Naive thymus-derived CD4-positive, alpha-beta T cell (primary cell): ENCODE measurements at regions of chr9 and their contacts with region 1.

Region 1: DNA sequence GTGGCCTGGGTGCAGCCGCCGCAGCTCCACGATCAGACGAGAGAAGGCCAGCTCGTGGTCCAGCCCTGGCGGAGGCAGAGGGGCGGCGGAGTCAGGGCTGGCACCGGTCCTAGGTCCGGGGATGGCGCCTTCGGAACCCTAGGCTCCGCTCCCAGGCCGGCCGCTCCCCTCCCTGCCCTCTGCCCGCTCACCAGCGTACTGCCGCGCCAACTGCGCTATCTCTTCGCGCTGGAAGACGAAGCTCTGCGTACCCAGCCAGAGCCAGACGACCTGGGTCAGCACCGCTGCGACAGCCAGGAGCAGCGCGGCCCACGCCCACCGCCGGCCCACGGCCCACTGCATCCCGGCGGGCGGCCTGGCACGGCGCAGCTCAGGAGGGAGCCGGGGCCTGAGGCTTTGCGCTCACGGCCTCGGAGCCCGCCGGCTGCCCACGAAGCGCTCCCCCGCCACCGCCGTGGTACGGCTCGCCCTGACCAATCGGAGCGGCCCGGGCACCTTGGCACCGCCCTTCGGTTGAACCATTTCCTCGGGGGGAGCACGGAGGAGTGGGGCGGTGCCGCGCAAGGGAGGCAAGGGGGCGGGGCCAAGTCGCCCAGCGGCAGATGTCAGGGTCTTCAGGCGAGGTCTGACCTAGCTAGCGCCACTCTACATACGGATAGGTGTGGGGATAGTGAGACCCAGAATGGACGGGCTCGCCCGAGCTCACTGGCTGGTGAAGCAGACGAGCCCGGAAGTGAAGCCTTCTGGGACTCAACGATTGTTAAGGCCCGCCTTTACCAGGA is at the start of gene SIGMAR1:
- DNase-seq: peak; percentile 88 to 97 (median 95)
- ATAC-seq: peak; percentile 97
- H3K4me3 ChIP-seq: peak within 1 kb of the TSS; percentile 94
- H3K4me3 Mint-ChIP-seq: peak within 1 kb of the TSS; percentile 88 to 93 (median 90)
- H3K27ac ChIP-seq: peak within 1 kb of the TSS; percentile 70
- H3K27ac Mint-ChIP-seq: peak within 1 kb of the TSS; percentile 88 to 98 (median 95)
- H3K4me1 ChIP-seq: peaks cover 21 to 22% of the 10 kb centered on the region in 2 donors
- H3K4me1 Mint-ChIP-seq: peaks cover 26 to 45% (median 37%) of the 10 kb centered on the region in 7 donors
- H3K27me3 ChIP-seq: no peaks in the 10 kb centered on the region
- H3K27me3 Mint-ChIP-seq: no peaks in the 10 kb centered on the region
- total RNA-seq, gene SIGMAR1: 20.7 to 63.8 (median 46.0) TPM

Region 2: DNA sequence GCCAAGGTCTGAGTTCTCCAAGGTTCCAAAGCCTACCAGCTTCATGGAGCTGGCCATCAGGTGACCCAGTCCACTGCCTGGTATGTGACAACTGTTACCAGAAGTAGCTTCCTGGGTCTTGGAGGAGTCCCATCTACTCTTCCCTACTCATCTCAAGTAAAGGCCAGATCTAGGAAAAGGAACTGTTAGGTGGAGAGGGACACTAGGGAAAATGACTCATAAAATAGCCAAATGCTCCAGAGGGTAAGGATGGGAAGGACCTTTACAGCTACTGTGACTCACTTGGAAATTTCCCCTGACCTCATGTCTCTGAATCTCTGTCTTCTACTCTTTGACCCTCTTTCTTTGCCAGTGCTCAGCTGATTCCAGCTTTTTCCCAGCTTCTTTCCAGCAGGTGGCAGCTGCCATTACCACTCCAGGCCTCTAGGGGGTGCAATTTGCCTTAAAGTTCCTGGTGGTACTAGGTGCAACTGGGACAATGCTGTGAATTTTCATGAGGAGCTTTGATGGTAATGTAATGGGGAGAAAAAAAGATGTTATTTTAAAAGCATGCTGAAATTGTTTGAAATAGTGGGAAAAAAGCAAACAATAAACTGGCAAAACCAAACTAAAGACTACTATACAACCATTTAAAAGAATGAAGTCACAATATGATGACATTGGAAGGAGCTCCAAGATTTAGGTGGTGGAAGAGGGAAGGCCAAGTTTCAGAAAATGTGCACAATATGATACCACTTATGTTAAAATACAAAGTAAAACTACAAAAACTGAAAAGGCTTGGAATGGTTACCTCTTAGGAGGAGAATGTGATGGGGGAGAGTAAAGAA is 233.8 kb before region 1 on chr9:
- CTCF ChIA-PET with region 1: interaction called, 8 read pairs
- POLR2A ChIA-PET with region 1: interaction called, 3 read pairs
- intact Hi-C with region 1: loop called in 1 of 2 experiments (anchors 1 kb)
- DNase-seq: peak in 8 of 9 donors; percentile 22 to 56 (median 40)
- ATAC-seq: peak; percentile 82
- H3K4me3 ChIP-seq: no peak overlapping the region
- H3K4me3 Mint-ChIP-seq: no peak overlapping the region
- H3K27ac ChIP-seq: no peak overlapping the region
- H3K27ac Mint-ChIP-seq: no peak overlapping the region
- H3K4me1 ChIP-seq: no peaks in the 10 kb centered on the region
- H3K4me1 Mint-ChIP-seq: peaks cover 0 to 3% (median 0%) of the 10 kb centered on the region in 7 donors
- H3K27me3 ChIP-seq: no peaks in the 10 kb centered on the region
- H3K27me3 Mint-ChIP-seq: no peaks in the 10 kb centered on the region

Region 3: DNA sequence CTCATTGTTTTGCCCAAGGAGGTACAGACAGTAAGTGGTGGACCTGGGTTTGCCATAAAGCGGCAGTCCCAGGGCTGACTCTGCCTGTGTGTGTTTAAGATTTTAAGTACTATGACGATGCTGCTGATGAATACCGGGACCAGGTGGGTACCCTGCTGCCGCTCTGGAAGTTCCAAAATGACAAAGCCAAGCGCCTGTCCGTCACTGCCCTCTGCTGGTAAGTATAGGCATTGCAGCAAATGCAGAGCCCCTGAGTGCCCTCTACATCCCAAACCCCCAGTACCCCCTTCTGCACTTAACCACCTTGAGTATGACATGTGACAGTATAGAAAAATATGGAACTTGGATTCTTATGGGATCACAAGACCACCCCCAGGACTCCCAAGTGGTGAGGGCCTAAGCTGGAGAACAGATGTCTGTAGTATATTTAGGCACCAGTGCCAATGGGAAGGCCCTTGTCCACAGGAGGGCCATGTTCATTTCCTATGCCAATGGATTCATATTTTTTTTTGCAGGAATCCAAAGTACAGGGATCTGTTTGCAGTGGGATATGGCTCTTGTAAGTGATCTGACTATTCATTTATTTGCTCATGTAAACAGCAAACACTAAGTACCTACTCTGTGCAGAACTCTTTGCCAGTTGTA is 136.8 kb before region 1 on chr9:
- CTCF ChIA-PET with region 1: interaction called, 10 read pairs
- POLR2A ChIA-PET with region 1: no interaction called
- intact Hi-C with region 1: loop called in 1 of 2 experiments (anchors 1 kb)
- DNase-seq: peak; percentile 38 to 80 (median 61)
- ATAC-seq: peak; percentile 90
- H3K4me3 ChIP-seq: no peak overlapping the region
- H3K4me3 Mint-ChIP-seq: no peak overlapping the region
- H3K27ac ChIP-seq: no peak overlapping the region
- H3K27ac Mint-ChIP-seq: no peak overlapping the region
- H3K4me1 ChIP-seq: no peaks in the 10 kb centered on the region
- H3K4me1 Mint-ChIP-seq: peaks cover 0 to 2% (median 0%) of the 10 kb centered on the region in 7 donors
- H3K27me3 ChIP-seq: no peaks in the 10 kb centered on the region
- H3K27me3 Mint-ChIP-seq: peaks cover 0 to 19% (median 0%) of the 10 kb centered on the region in 5 donors

Region 4: GRCh38 chr9:34541540-34541939 is 96.0 kb before region 1 on chr9:
- CTCF ChIA-PET with region 1: no interaction called
- POLR2A ChIA-PET with region 1: no interaction called
- intact Hi-C with region 1: no loop called
- DNase-seq: no peak
- ATAC-seq: no peak
- H3K4me3 ChIP-seq: no peak overlapping the region
- H3K4me3 Mint-ChIP-seq: no peak overlapping the region
- H3K27ac ChIP-seq: no peak overlapping the region
- H3K27ac Mint-ChIP-seq: no peak overlapping the region
- H3K4me1 ChIP-seq: no peaks in the 10 kb centered on the region
- H3K4me1 Mint-ChIP-seq: peaks cover 0 to 2% (median 0%) of the 10 kb centered on the region in 7 donors
- H3K27me3 ChIP-seq: no peaks in the 10 kb centered on the region
- H3K27me3 Mint-ChIP-seq: peaks cover 4 to 34% (median 10%) of the 10 kb centered on the region in 5 donors

Region 5: DNA sequence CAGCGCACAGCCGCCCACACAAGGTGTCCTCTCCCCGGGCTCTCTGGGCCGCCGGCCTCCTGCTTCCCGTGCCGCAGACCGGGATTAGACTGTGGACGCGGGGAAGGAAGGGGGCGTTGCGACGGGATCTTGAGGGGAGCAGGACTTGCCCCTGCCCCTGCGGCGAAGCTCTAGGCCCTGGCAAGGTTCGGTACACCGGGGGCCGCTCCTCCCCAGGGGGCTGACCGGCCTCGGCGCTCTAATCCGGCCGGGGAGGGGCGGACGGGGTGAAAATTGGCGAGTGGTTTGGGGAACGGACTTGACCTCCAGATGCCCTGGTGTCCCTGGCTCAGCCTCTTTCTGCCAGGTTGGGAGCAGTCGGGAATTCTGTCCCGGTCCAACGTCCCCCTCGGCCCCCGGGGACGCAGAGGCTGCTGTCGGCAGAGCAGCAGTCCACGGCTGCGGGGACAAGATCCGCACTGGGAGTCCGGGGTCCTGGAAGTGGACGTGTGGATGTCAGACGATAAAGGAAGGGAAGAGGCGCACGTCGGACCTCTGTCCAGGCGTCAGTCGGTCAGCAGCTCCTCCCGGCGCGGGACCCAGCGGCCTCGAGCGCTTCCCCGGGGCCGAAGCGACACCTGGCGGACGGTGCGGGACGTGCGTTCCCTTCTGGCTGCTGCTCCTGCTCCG is 46.2 kb before region 1 on chr9:
- CTCF ChIA-PET with region 1: interaction called, 5 read pairs
- POLR2A ChIA-PET with region 1: no interaction called
- intact Hi-C with region 1: loop called in 1 of 2 experiments (anchors 5 kb)
- DNase-seq: peak; percentile 48 to 85 (median 70)
- ATAC-seq: peak; percentile 85
- H3K4me3 ChIP-seq: peak overlapping the region; percentile 71
- H3K4me3 Mint-ChIP-seq: peak overlapping the region; percentile 28 to 91 (median 81)
- H3K27ac ChIP-seq: no peak overlapping the region
- H3K27ac Mint-ChIP-seq: no peak overlapping the region
- H3K4me1 ChIP-seq: peaks cover 0 to 13% of the 10 kb centered on the region in 2 donors
- H3K4me1 Mint-ChIP-seq: peaks cover 10 to 31% (median 28%) of the 10 kb centered on the region in 7 donors
- H3K27me3 ChIP-seq: peaks cover 4 to 17% of the 10 kb centered on the region in 2 donors
- H3K27me3 Mint-ChIP-seq: peaks cover 55 to 78% (median 66%) of the 10 kb centered on the region in 5 donors

Region 6: DNA sequence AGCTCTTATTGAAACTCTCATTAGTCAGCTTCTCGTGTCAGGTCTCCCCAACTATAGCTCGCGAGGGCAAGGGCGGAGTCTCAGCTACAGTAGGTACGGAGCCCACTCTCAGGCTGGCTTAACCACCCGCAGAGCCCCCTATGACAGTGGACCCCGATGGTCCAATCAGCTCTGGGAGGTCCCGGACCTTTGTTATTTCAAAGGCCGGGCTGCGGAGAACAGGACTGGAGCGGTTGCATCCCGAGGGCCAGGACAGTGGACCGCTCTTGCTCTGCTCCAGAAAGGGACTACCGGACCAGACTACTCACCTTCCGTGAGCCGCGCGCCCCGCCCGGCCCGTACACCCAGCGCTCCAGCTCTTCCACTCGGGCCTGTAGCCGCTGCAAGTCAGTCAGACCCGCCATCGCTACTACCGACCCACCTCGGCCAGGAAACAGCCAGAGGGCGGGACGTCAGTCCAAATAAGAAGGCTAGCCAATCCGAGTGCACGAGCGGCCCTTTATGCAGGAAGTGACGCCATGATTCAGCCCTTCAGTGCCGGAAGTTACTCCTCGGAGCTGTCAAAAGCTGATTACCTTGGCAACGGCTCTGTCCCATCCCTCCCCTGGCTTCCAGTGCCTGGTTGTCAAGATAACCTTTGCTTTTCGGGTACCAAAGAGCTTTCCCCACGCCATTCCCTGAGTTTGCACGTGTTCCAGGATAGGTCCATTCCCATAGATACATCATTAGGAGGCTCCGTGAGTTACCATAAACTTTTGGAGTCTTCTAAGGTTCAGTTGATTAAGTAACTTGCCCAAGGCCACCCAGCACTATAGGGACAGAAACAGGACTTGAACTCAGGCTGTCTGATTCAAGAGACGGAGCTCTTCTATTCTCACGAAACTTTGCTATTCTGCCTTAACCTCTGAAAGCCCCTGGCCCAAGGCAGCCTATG is 17.2 kb before region 1 on chr9 and contains the start of gene DCTN3:
- CTCF ChIA-PET with region 1: interaction called, 98 read pairs
- POLR2A ChIA-PET with region 1: interaction called, 99 read pairs
- intact Hi-C with region 1: loop called in 1 of 2 experiments (anchors 1 kb)
- DNase-seq: peak; percentile 61 to 94 (median 91)
- ATAC-seq: peak; percentile 98
- H3K4me3 ChIP-seq: peak within 1 kb of the TSS; percentile 86
- H3K4me3 Mint-ChIP-seq: peak within 1 kb of the TSS; percentile 88 to 98 (median 94)
- H3K27ac ChIP-seq: peak within 1 kb of the TSS; percentile 74
- H3K27ac Mint-ChIP-seq: peak within 1 kb of the TSS; percentile 65 to 97 (median 88)
- H3K4me1 ChIP-seq: peaks cover 12 to 30% of the 10 kb centered on the region in 2 donors
- H3K4me1 Mint-ChIP-seq: peaks cover 23 to 39% (median 32%) of the 10 kb centered on the region in 7 donors
- H3K27me3 ChIP-seq: peaks cover 3 to 31% of the 10 kb centered on the region in 2 donors
- H3K27me3 Mint-ChIP-seq: peaks cover 18 to 41% (median 27%) of the 10 kb centered on the region in 5 donors
- total RNA-seq, gene DCTN3: 55.6 to 110 (median 73.0) TPM

Region 7: DNA sequence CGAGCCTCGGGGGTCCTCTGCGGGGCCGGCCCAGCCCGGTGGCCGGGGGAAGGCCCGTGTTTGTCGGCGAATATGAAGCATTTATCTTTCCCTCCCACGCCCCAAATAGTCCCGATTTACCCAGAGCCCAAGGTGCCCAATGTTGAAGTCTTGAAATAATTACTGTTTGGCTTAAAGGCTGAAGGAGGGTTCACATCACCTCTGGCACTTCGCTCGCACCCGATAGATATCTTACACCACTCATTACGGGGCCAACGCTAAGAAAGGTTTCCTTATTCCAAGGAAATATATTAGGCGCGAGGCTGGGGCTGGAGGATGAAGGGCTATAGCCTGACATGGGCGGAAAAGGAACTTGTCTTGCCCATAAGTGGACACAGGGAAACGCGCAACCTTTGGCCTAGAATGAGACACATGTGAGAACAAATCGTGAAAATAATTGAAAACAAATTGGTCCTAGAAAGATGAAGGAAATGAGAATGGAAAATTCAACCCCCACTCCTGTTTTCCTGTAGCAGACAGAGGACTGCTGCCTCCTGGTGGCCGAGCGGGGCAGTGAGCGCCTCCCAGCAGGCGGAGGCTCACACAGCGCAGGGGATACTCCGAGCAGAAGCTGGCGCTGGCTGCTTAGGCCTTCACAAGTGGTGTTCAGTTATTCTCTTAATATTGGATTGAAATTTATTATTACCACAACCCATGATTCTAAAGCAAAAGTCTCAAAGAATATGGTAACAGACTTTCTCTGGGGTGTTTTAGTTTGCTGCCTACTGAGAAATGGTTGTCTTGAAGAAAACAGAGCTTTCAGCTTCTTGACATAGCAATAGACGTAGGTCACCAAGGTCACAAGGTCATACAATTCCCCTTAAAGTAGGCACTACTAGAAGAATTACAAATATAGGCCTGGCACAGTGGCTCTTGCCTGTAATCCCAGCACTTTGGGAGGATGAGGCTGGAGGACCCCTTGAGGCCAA is 64.5 kb after region 1 on chr9:
- CTCF ChIA-PET with region 1: interaction called, 9 read pairs
- POLR2A ChIA-PET with region 1: interaction called, 5 read pairs
- intact Hi-C with region 1: loop called in 1 of 2 experiments (anchors 1 kb)
- DNase-seq: peak; percentile 59 to 83 (median 73)
- ATAC-seq: peak; percentile 90
- H3K4me3 ChIP-seq: peak overlapping the region; percentile 61
- H3K4me3 Mint-ChIP-seq: peak overlapping the region; percentile 80 to 91 (median 84)
- H3K27ac ChIP-seq: no peak overlapping the region
- H3K27ac Mint-ChIP-seq: peak overlapping the region in 7 of 9 donors; percentile 1 to 84 (median 20)
- H3K4me1 ChIP-seq: no peaks in the 10 kb centered on the region
- H3K4me1 Mint-ChIP-seq: peaks cover 5 to 9% (median 6%) of the 10 kb centered on the region in 7 donors
- H3K27me3 ChIP-seq: no peaks in the 10 kb centered on the region
- H3K27me3 Mint-ChIP-seq: peaks cover 0 to 17% (median 0%) of the 10 kb centered on the region in 5 donors